HAP-1 (cell line): ENCODE measurements at regions of chr1 and their contacts with region 1.

Region 1: GRCh38 chr1:12314333-12314903 is 84.6 kb downstream of the VPS13D start:
- DNase-seq: peak in 1 of 2 experiments; percentile 56
- H3K4me3 ChIP-seq: no peak overlapping the region
- H3K4me1 ChIP-seq: no peaks in the 10 kb centered on the region
- H3K27me3 ChIP-seq: no peaks in the 10 kb centered on the region

Region 2: GRCh38 chr1:12619792-12620487 is 305.5 kb after region 1 on chr1:
- in situ Hi-C with region 1: loop called (anchors 25 kb)
- DNase-seq: peak; percentile 82 to 90
- H3K4me3 ChIP-seq: peak overlapping the region; percentile 70
- H3K4me1 ChIP-seq: peaks cover 8% of the 10 kb centered on the region
- H3K27me3 ChIP-seq: no peaks in the 10 kb centered on the region

Region 3: GRCh38 chr1:12658531-12659453 is 344.4 kb after region 1 on chr1:
- in situ Hi-C with region 1: loop called (anchors 5 kb)
- DNase-seq: peak; percentile 66 to 88
- H3K4me3 ChIP-seq: no peak overlapping the region
- H3K4me1 ChIP-seq: no peaks in the 10 kb centered on the region
- H3K27me3 ChIP-seq: 0 out of 2 replicates have a peak, but pooled peaks cover 2% of the 10 kb centered on the region

Region 4: GRCh38 chr1:12778907-12779306 is 464.5 kb after region 1 on chr1:
- in situ Hi-C with region 1: loop called (anchors 10 kb)
- DNase-seq: no peak
- H3K4me3 ChIP-seq: no peak overlapping the region
- H3K4me1 ChIP-seq: no peaks in the 10 kb centered on the region
- H3K27me3 ChIP-seq: no peaks in the 10 kb centered on the region; the same call in 1 of the 2 replicates